SK-N-SH (cell line): ENCODE measurements at regions of chr11 and their contacts with region 1.

Region 1: DNA sequence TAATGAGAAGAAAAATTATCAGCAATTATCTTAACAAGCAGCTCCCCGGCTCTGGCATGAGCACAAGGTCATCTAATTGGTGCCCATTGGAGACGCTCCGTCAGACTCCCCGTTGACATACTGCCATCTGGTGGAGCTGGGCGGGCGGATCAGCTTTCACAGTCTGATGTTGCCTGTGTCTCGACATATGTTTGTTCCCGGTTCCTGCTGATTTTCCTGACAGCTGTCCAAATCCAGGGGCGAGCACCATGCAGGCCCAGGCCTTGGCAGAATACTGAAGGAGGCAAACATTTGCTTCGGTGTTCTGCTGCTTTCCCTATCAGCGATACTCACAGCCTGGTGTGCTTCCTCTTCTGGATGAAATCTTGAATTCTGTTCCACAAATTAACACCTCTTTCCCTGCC is 43.8 kb upstream of the BARX2 start:
- DNase-seq: peak; percentile 77
- H3K4me3 ChIP-seq: peak overlapping the region in 1 of 2 experiments; percentile 2; a peak in 1 of 4 replicates
- H3K27ac ChIP-seq: no peak overlapping the region
- H3K4me1 ChIP-seq: no peaks in the 10 kb centered on the region; a peak in 1 of 4 replicates
- H3K27me3 ChIP-seq: no peaks in the 10 kb centered on the region
- CTCF ChIP-seq: peak; percentile 92
- EP300 ChIP-seq: no peak
- RAD21 ChIP-seq: peak; percentile 94

Region 2: GRCh38 chr11:129117595-129118350 is 214.1 kb before region 1 on chr11:
- CTCF ChIA-PET with region 1: interaction called, 58 read pairs
- POLR2A ChIA-PET with region 1: no interaction called
- DNase-seq: peak; percentile 58
- H3K4me3 ChIP-seq: peak overlapping the region in 1 of 2 experiments; percentile 16; a peak in 1 of 4 replicates
- H3K27ac ChIP-seq: no peak overlapping the region
- H3K4me1 ChIP-seq: peaks cover 0 to 13% of the 10 kb centered on the region in 2 experiments; a peak in 2 of 4 replicates
- H3K27me3 ChIP-seq: no peaks in the 10 kb centered on the region
- CTCF ChIP-seq: peak; percentile 98
- EP300 ChIP-seq: no peak
- RAD21 ChIP-seq: peak; percentile 99

Region 3: DNA sequence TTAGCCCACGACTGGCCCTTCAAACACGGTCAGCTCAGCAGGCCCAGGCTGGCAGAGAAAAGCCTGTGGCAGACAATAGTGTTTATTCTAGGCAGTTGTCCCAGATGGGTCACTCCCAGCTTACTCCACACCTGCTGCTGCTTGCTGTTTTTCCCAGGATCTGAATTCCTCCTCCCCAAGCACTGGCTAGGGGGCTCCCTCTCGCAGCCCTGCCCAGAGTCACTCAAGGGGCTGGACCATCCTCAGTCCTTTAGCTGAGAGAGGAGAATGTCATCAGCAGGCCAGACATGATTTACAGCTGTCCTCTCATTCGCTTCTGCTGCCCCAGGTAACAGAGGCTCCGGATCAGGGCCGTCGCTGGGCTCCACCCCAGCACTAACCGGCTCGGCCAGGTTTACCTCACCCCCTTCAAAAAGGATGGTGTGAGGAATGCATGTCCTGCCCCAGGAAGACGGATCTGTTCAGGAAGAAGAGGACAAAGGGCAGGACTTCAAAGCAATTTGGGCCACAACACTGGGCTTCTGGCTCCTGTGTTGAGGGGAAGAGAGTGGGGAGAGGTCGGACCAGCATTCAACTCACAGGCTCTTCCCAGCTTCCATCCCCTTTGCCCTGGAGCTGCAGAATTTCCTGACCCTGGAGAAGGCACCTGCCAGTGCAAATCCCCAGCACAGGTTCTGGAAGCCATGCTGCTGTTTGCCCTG is 15.9 kb before region 1 on chr11:
- CTCF ChIA-PET with region 1: interaction called, 28 read pairs
- POLR2A ChIA-PET with region 1: no interaction called
- DNase-seq: no peak
- H3K4me3 ChIP-seq: no peak overlapping the region
- H3K27ac ChIP-seq: no peak overlapping the region
- H3K4me1 ChIP-seq: peaks cover 0 to 6% of the 10 kb centered on the region in 2 experiments; a peak in 1 of 4 replicates
- H3K27me3 ChIP-seq: no peaks in the 10 kb centered on the region
- CTCF ChIP-seq: no peak
- EP300 ChIP-seq: no peak
- RAD21 ChIP-seq: no peak

Region 4: DNA sequence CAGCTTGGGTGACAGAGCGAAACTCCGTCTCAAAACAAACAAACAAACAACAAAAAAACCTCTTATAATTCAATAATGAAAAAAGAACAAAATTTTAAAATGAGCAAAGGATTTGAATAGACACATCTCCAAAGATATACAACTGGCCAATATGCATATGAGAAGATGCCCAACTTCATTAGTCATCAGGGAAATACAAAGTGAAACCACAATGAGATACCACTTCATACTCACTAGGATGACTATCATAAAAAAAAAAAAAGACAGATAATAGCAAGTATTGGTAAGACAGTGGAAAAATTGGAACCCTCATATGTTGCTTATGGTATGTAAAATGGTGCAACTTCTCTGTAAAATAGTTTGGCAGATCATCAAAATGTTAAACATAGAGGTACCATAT is 15.0 kb after region 1 on chr11:
- CTCF ChIA-PET with region 1: interaction called, 10 read pairs
- POLR2A ChIA-PET with region 1: no interaction called
- DNase-seq: no peak
- H3K4me3 ChIP-seq: no peak overlapping the region
- H3K27ac ChIP-seq: no peak overlapping the region
- H3K4me1 ChIP-seq: no peaks in the 10 kb centered on the region
- H3K27me3 ChIP-seq: peaks cover 8% of the 10 kb centered on the region; the same call in 1 of the 2 replicates
- CTCF ChIP-seq: no peak
- EP300 ChIP-seq: no peak
- RAD21 ChIP-seq: no peak